Endothelial cell of umbilical vein (primary cell): ENCODE measurements at regions of chr14 and their contacts with region 1.

Region 1: GRCh38 chr14:69460093-69460701 is 24.3 kb upstream of the PLEKHD1 start:
- DNase-seq: peak; percentile 90
- H3K4me3 ChIP-seq: no peak overlapping the region
- H3K27ac ChIP-seq: peak overlapping the region; percentile 28
- H3K4me1 ChIP-seq: peaks cover 16% of the 10 kb centered on the region
- H3K27me3 ChIP-seq: no peaks in the 10 kb centered on the region
- CTCF ChIP-seq: peak; percentile 60 to 74
- POLR2A ChIP-seq: no peak

Region 2: DNA sequence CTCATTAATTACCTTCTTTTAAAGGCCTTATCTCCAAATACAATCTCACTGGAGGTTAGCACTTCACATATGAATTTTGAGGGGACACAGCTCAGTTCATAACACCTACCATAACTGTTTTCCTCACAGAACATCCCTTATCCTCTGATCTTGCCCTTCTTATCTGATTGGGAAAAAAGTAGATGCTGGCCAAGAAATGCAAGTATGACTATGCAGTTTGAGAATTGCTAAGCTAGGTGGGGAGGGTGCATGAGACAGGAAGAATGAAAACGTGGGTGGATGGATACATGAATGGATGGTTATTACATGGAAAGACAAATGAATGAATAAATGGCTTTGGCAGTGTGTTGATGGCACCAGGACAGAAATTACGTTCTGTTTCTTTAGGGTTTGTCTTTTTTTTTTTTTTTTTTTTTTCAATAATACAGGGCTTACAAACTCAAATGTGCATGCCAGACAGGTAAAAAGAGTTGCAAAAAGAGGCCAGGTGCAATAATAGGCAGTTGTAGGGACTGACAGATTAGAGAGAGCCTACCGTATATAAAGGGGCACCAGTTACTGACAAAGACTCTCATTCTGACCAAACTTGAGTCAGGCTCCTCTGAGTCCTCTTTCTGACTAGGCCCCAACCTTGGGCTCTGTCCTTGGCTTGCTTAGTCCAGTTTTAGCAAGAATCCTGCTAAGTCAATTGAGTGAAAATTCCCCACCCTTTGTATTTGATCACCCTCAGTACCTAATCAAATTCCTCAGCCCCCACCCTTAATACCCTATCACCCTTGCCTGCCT is 972.2 kb before region 1 on chr14:
- CTCF ChIA-PET with region 1: no interaction called
- POLR2A ChIA-PET with region 1: no interaction called
- dilution Hi-C with region 1: no loop called
- intact Hi-C with region 1: loop called (anchors 10 kb)
- DNase-seq: no peak
- H3K4me3 ChIP-seq: no peak overlapping the region
- H3K27ac ChIP-seq: no peak overlapping the region
- H3K4me1 ChIP-seq: peaks cover 8% of the 10 kb centered on the region
- H3K27me3 ChIP-seq: no peaks in the 10 kb centered on the region
- CTCF ChIP-seq: no peak
- POLR2A ChIP-seq: no peak

Region 3: GRCh38 chr14:69129264-69129880 is 330.8 kb before region 1 on chr14:
- CTCF ChIA-PET with region 1: interaction called, 19 read pairs
- POLR2A ChIA-PET with region 1: no interaction called
- dilution Hi-C with region 1: no loop called
- intact Hi-C with region 1: loop called (anchors 1 kb)
- DNase-seq: peak; percentile 82
- H3K4me3 ChIP-seq: no peak overlapping the region
- H3K27ac ChIP-seq: no peak overlapping the region
- H3K4me1 ChIP-seq: peaks cover 16% of the 10 kb centered on the region
- H3K27me3 ChIP-seq: no peaks in the 10 kb centered on the region
- CTCF ChIP-seq: peak; percentile 91 to 92
- POLR2A ChIP-seq: no peak

Region 4: GRCh38 chr14:69242311-69243224 is 217.6 kb before region 1 on chr14:
- CTCF ChIA-PET with region 1: interaction called, 59 read pairs
- POLR2A ChIA-PET with region 1: no interaction called
- dilution Hi-C with region 1: no loop called
- intact Hi-C with region 1: loop called (anchors 1 kb)
- DNase-seq: peak; percentile 71
- H3K4me3 ChIP-seq: no peak overlapping the region
- H3K27ac ChIP-seq: no peak overlapping the region
- H3K4me1 ChIP-seq: no peaks in the 10 kb centered on the region
- H3K27me3 ChIP-seq: no peaks in the 10 kb centered on the region
- CTCF ChIP-seq: peak; percentile 59 to 60
- POLR2A ChIP-seq: no peak

Region 5: DNA sequence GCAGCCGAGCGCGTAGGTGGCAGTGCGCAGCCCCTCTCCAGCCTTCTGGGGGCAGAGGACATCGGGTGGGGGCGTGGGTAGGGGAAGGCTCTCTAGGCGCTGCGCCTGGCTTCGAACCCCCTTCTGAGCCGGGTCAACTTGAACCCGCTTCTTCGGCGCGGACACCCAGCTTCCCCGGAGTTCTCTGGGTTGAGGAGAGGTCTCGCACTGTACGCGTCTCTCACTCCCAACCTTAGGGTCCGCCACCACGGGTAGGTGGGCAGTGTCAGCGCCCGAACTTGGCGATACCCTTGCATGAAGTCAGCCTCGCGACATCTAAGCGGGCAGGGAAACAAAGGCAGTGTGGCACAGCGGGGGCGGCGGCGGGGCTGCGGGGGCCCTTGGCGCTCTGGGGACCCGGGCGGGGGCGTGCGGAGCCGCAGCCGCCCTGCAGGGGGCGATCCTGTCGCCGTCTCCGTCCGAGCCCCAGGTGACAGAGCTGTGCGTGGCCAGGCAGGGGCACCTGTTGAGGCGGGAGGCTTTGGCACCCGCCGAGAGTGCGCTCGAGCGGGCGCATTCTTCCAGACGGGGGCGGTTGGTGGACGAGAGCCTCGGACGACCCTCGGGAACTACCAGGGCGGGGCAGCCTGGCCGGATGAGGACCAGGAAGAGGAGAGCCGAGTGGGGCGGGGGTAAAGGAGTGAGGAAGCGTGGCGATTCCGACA is 199.2 kb before region 1 on chr14:
- CTCF ChIA-PET with region 1: interaction called, 13 read pairs
- POLR2A ChIA-PET with region 1: interaction called, 5 read pairs
- dilution Hi-C with region 1: no loop called
- intact Hi-C with region 1: loop called (anchors 5 kb)
- DNase-seq: no peak
- H3K4me3 ChIP-seq: peak overlapping the region; percentile 38 to 45 (median 39)
- H3K27ac ChIP-seq: no peak overlapping the region
- H3K4me1 ChIP-seq: peaks cover 12% of the 10 kb centered on the region
- H3K27me3 ChIP-seq: peaks cover 28 to 30% of the 10 kb centered on the region in 2 experiments
- CTCF ChIP-seq: peak; percentile 47 to 72
- POLR2A ChIP-seq: no peak

Region 6: DNA sequence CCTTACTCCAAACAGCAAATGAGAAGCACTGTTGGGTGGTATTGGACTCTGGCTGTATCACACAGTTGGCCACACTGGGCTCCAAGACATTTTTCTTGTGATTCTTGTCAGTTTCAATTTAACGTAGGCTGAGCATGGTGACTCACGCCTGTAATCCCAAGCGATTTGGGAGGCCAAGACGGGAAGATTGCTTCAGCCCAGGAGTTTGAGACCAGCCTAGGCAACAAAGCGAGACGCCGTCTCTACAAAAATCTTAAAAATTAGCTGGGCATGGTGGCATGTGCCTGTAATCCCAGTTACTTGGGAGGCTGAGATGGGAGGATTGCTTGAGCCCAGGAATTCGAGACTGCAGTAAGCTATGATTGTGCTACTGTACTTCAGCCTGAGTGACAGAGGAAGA is 11.0 kb before region 1 on chr14:
- CTCF ChIA-PET with region 1: interaction called, 11 read pairs
- POLR2A ChIA-PET with region 1: no interaction called
- dilution Hi-C with region 1: no loop called
- intact Hi-C with region 1: no loop called
- DNase-seq: no peak
- H3K4me3 ChIP-seq: no peak overlapping the region
- H3K27ac ChIP-seq: no peak overlapping the region
- H3K4me1 ChIP-seq: no peaks in the 10 kb centered on the region
- H3K27me3 ChIP-seq: no peaks in the 10 kb centered on the region
- CTCF ChIP-seq: no peak
- POLR2A ChIP-seq: no peak